Dendritic cell treated with granulocyte-macrophage colony-stimulating factor and Interleukin-4, amounts not matched to agents 40 ng/mL and 50 ng/mL, for 4 days (primary cell): ENCODE measurements at regions of chr14 and their contacts with region 1.

Region 1: DNA sequence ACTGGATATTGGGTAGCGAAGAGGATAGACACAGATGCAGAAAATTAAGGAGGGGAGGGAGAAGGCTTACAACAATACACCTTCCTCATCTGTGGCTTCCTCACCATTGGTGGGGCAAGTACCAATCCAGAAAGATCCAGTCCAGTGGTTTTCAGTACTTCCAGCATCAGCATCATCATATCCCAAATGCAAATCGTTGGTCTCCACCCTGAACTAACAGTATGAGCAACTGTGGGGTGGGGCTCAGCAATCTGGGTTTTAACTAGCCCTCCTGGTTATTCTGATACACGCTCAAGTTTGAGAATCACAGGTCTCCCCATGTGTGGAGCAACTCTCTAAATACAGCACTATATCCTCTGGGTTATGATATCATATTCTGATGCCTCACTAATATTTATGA is 193.7 kb downstream of the PAX9 start:
- H3K4me3 Mint-ChIP-seq: no peak overlapping the region
- H3K27ac Mint-ChIP-seq: no peak overlapping the region
- H3K4me1 Mint-ChIP-seq: no peaks in the 10 kb centered on the region
- H3K27me3 Mint-ChIP-seq: peaks cover 2% of the 10 kb centered on the region

Region 2: DNA sequence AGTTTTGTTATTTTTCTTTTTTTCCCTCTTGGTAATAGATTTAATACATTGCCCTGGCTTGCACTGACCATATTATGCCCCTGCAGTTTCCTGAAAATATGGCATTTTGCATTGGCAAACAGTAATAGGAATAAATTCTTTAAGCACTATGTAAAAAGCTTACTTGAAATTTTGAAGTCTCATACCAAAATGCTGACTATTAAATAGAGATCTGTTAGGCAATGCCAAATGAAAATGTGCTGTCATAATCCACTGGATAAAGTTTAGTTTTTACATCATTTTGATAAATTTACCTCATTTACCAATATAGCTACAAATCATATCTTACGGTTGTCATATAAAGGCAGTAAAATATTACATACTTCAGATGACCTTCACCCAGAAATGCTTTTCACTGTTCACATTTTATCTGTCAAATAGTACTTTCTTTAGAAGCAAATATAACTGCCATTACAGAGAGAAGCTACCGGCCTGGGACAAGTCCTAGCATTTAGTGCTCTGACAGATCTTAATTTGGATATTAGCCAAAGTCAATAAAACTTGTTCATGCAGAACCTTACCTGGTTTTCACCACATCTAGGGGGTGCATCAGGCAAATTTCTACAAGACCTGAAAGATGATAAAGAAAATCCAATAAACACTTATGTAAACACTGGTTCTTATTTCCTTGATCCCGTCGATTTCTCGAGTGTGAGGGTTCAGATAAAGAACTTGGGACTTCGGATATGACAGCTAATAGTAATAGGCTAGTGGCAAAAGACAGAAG is 19.2 kb after region 1 on chr14:
- intact Hi-C with region 1: loop called (anchors 1 kb)
- H3K4me3 Mint-ChIP-seq: no peak overlapping the region
- H3K27ac Mint-ChIP-seq: no peak overlapping the region
- H3K4me1 Mint-ChIP-seq: no peaks in the 10 kb centered on the region
- H3K27me3 Mint-ChIP-seq: no peaks in the 10 kb centered on the region